Activated CD8-positive, alpha-beta T cell treated with anti-CD3 and anti-CD28 coated beads, Interleukin-2, amount 10 ng/mL, durations not matched to agents 7 days and 5 days (primary cell): ENCODE measurements at regions of chr6 and their contacts with region 1.

Region 1: GRCh38 chr6:42417641-42418112 is 34.0 kb downstream of the TRERF1 start:
- DNase-seq: peak; percentile 84
- ATAC-seq: peak; percentile 85
- H3K4me3 Mint-ChIP-seq: peak overlapping the region; percentile 55
- H3K27ac Mint-ChIP-seq: peak overlapping the region; percentile 80
- H3K4me1 Mint-ChIP-seq: peaks cover 47% of the 10 kb centered on the region
- H3K27me3 Mint-ChIP-seq: peaks cover 4% of the 10 kb centered on the region

Region 2: GRCh38 chr6:42367353-42368011 is 50.2 kb before region 1 on chr6:
- CTCF ChIA-PET with region 1: no interaction called
- POLR2A ChIA-PET with region 1: no interaction called
- DNase-seq: peak; percentile 48
- ATAC-seq: peak; percentile 59
- H3K4me3 Mint-ChIP-seq: peak overlapping the region; percentile 64
- H3K27ac Mint-ChIP-seq: peak overlapping the region; percentile 90
- H3K4me1 Mint-ChIP-seq: peaks cover 69% of the 10 kb centered on the region
- H3K27me3 Mint-ChIP-seq: no peaks in the 10 kb centered on the region

Region 3: DNA sequence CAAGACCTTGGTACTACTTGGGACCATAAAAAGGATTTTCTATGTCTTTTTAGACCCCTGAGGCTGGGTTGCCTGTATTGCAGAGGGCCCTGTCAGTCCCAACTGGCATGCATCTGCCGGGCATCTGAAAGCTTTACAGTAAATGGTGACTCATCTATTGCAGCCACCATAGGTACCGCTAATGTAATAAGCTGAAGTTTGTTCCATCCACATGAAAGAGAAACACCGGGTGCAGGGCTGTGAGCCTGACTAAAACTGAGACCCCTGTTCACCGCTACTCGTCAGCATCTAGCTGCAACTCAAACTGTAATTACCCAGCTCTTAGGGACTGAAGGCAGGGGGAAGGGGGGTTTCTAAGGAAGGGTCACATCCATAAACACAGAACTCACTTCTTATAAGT is 15.5 kb before region 1 on chr6:
- CTCF ChIA-PET with region 1: interaction called, 17 read pairs
- POLR2A ChIA-PET with region 1: interaction called, 7 read pairs
- DNase-seq: peak; percentile 68
- ATAC-seq: peak; percentile 88
- H3K4me3 Mint-ChIP-seq: no peak overlapping the region
- H3K27ac Mint-ChIP-seq: peak overlapping the region; percentile 47
- H3K4me1 Mint-ChIP-seq: peaks cover 47% of the 10 kb centered on the region
- H3K27me3 Mint-ChIP-seq: no peaks in the 10 kb centered on the region

Region 4: GRCh38 chr6:42482174-42482573 is 64.5 kb after region 1 on chr6:
- CTCF ChIA-PET with region 1: no interaction called
- POLR2A ChIA-PET with region 1: no interaction called
- DNase-seq: no peak
- ATAC-seq: no peak
- H3K4me3 Mint-ChIP-seq: no peak overlapping the region
- H3K27ac Mint-ChIP-seq: no peak overlapping the region
- H3K4me1 Mint-ChIP-seq: no peaks in the 10 kb centered on the region
- H3K27me3 Mint-ChIP-seq: peaks cover 9% of the 10 kb centered on the region